Calu3 (cell line): ENCODE measurements at regions of chr16 and their contacts with region 1.

Region 1: GRCh38 chr16:11639925-11640899 is 28.0 kb upstream of the SNN start:
- DNase-seq: peak; percentile 87
- H3K4me3 Mint-ChIP-seq: peak overlapping the region; percentile 44
- H3K27ac Mint-ChIP-seq: peak overlapping the region; percentile 99
- H3K4me1 Mint-ChIP-seq: peaks cover 57% of the 10 kb centered on the region
- H3K27me3 Mint-ChIP-seq: no peaks in the 10 kb centered on the region
- CTCF ChIP-seq: no peak

Region 2: GRCh38 chr16:11535471-11535870 is 104.7 kb before region 1 on chr16:
- CTCF ChIA-PET with region 1: interaction called, 18 read pairs
- intact Hi-C with region 1: loop called (anchors 1 kb)
- DNase-seq: peak; percentile 30
- H3K4me3 Mint-ChIP-seq: no peak overlapping the region
- H3K27ac Mint-ChIP-seq: peak overlapping the region; percentile 50
- H3K4me1 Mint-ChIP-seq: peaks cover 42% of the 10 kb centered on the region
- H3K27me3 Mint-ChIP-seq: no peaks in the 10 kb centered on the region
- CTCF ChIP-seq: no peak

Region 3: DNA sequence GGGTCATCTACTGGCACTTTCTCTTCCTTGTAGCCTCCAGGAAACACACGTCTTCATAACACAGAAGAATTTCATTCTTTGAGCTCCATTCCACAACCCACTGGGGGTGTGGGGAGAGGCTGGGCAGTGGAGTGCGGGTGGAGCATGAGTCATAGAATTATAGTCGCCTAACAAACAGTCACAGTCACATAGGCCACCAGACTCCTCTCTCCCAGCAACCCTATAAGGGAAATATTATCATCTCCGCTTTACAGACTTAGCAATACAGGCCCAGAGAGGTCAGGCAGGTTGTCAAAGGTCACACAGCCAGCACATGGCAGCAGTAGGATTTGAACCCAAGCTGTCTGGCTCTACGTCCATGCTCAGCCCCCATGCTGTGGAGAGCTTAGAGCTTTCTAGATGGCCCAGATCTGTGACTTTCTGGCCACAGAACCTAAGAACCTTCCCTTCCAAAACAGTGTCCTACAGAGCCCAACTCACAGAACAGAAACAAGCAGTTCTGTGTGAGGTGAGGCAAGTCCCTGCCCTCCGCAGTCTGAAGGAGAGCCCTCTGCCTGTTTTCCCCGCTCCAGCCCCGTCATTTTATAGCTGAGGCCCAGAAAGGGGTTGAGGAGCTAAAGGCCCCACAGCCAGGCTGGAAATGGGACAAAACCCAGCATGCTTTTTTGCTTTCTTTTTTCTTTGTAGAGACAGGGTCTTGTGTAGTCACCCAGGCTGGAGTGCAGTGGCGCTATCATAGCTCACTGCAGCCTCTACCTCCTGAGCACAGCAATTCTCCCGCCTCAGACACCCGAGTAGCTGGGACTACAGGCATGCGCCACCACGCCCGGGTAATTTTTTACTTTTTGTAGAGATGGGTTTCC is 42.7 kb before region 1 on chr16:
- CTCF ChIA-PET with region 1: interaction called, 11 read pairs
- intact Hi-C with region 1: no loop called
- DNase-seq: peak; percentile 72
- H3K4me3 Mint-ChIP-seq: peak overlapping the region; percentile 2
- H3K27ac Mint-ChIP-seq: peak overlapping the region; percentile 46
- H3K4me1 Mint-ChIP-seq: peaks cover 27% of the 10 kb centered on the region
- H3K27me3 Mint-ChIP-seq: no peaks in the 10 kb centered on the region
- CTCF ChIP-seq: no peak

Region 4: DNA sequence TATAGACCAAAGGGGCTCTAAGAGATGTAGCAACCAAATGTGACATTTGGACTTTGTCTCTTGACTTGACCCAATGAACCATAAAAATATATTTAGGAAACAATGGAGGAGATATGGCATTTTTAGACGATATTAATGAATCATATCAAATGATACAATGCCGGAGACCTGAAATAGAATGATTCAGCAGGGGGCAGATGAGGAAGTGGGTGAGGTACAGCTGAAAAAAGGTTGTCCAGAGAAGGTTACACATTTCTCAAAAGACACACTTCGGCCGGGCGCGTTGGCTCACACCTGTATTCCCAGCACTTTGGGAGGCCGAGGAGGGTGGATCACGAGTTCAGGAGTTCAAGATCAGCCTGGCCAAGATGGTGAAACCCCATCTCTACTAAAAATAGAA is 11.6 kb after region 1 on chr16:
- CTCF ChIA-PET with region 1: interaction called, 12 read pairs
- intact Hi-C with region 1: no loop called
- DNase-seq: peak; percentile 46
- H3K4me3 Mint-ChIP-seq: no peak overlapping the region
- H3K27ac Mint-ChIP-seq: no peak overlapping the region
- H3K4me1 Mint-ChIP-seq: peaks cover 14% of the 10 kb centered on the region
- H3K27me3 Mint-ChIP-seq: no peaks in the 10 kb centered on the region
- CTCF ChIP-seq: no peak